ENCODE measurements at regions of chr7 and their contacts with region 1.

Region 1: GRCh38 chr7:150356265-150356897 is 12.2 kb upstream of the REPIN1 start:
- DNase-seq: no peak
- H3K4me3 ChIP-seq: no peak overlapping the region
- H3K27ac ChIP-seq: no peak overlapping the region
- H3K4me1 ChIP-seq: peaks cover 8% of the 10 kb centered on the region; the same call in 1 of the 2 replicates
- H3K27me3 ChIP-seq: no peaks in the 10 kb centered on the region
- CTCF ChIP-seq: peak; percentile 85

Region 2: DNA sequence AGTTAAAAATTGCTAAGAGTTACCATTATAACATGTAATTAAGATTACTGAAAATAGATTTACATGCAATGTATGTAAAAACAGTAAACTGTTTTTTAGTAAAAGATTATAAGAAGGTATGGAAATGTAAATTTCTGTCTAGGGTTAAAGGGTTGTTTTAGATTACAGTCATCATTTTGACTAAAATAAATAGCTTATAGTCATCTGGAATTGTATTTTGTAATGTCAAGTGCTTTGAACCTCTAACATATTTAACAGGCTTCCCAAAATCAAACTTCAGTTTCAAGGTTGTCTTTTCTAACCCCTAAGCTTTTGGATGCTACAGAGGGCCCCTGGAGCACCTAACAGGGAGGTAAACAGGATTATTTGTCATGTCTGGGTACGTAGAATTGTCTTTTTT is 823.7 kb before region 1 on chr7:
- CTCF ChIA-PET with region 1: interaction called, 11 read pairs
- POLR2A ChIA-PET with region 1: no interaction called
- intact Hi-C with region 1: no loop called
- DNase-seq: no peak
- H3K4me3 ChIP-seq: no peak overlapping the region
- H3K27ac ChIP-seq: no peak overlapping the region
- H3K4me1 ChIP-seq: no peaks in the 10 kb centered on the region
- H3K27me3 ChIP-seq: no peaks in the 10 kb centered on the region
- CTCF ChIP-seq: no peak

Region 3: GRCh38 chr7:149690688-149691446 is 665.5 kb before region 1 on chr7:
- CTCF ChIA-PET with region 1: no interaction called
- POLR2A ChIA-PET with region 1: no interaction called
- intact Hi-C with region 1: no loop called
- DNase-seq: peak; percentile 80 to 95
- H3K4me3 ChIP-seq: peak overlapping the region; percentile 59
- H3K27ac ChIP-seq: no peak overlapping the region
- H3K4me1 ChIP-seq: peaks cover 9% of the 10 kb centered on the region
- H3K27me3 ChIP-seq: no peaks in the 10 kb centered on the region
- CTCF ChIP-seq: no peak

Region 4: GRCh38 chr7:150314639-150315239 is 41.6 kb before region 1 on chr7:
- CTCF ChIA-PET with region 1: interaction called, 4 read pairs
- POLR2A ChIA-PET with region 1: interaction called, 19 read pairs
- intact Hi-C with region 1: no loop called
- DNase-seq: peak in 1 of 2 experiments; percentile 29
- H3K4me3 ChIP-seq: no peak overlapping the region
- H3K27ac ChIP-seq: 0 out of 2 replicates have a peak overlapping the region, but pooled peaks have one; percentile 71
- H3K4me1 ChIP-seq: peaks cover 64% of the 10 kb centered on the region
- H3K27me3 ChIP-seq: no peaks in the 10 kb centered on the region
- CTCF ChIP-seq: no peak

Region 5: GRCh38 chr7:150378853-150379440 is 22.6 kb after region 1 on chr7 and contains the start of gene ZNF775:
- CTCF ChIA-PET with region 1: no interaction called
- POLR2A ChIA-PET with region 1: no interaction called
- intact Hi-C with region 1: loop called (anchors 1 kb)
- DNase-seq: peak; percentile 89 to 99
- H3K4me3 ChIP-seq: peak within 1 kb of the TSS; percentile 89
- H3K27ac ChIP-seq: peak within 1 kb of the TSS; percentile 31
- H3K4me1 ChIP-seq: peaks cover 20% of the 10 kb centered on the region
- H3K27me3 ChIP-seq: no peaks in the 10 kb centered on the region
- CTCF ChIP-seq: no peak
- total RNA-seq, gene ZNF775: 3.1 and 3.4 TPM in 2 replicates

Region 6: DNA sequence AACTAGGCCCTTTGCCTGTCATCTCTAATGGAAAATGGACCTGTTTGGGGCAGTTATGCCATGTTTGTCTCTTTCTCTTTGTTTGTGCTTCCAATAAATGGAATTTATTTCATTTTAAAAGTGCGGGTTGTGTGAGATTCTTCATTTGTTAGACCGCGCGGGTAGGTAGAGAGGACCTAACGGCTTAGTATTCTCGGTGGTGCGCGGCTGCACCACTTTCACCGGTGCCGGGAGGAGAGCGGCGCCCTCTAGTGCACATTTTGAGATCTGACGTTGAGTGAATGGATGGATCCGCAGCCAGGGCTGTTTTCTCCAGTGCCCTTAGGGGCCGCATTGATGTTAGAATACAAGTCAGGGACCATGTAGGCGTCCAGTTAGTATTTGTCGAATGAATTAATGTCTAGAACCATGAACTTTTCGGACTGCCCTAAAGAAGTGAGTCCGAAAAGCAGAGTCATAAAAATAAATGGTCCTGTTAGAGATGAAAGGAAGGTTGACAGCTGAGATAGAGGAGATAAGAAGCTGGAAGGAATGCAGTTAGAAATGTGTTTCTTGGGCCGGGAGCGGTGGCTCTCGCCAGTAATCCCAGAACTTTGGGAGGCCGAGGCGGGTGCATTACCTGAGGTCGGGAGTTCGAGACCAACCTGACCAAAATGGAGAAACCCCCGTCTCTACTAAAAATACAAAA is 64.8 kb after region 1 on chr7:
- CTCF ChIA-PET with region 1: interaction called, 10 read pairs
- POLR2A ChIA-PET with region 1: no interaction called
- intact Hi-C with region 1: loop called (anchors 1 kb)
- DNase-seq: peak; percentile 62 to 83
- H3K4me3 ChIP-seq: no peak overlapping the region
- H3K27ac ChIP-seq: no peak overlapping the region
- H3K4me1 ChIP-seq: no peaks in the 10 kb centered on the region; the same call in 1 of the 2 replicates
- H3K27me3 ChIP-seq: peaks cover 15% of the 10 kb centered on the region; the same call in 1 of the 2 replicates
- CTCF ChIP-seq: peak; percentile 96

Region 7: GRCh38 chr7:150514748-150515222 is 158.4 kb after region 1 on chr7 and contains the start of gene GIMAP7:
- CTCF ChIA-PET with region 1: no interaction called
- POLR2A ChIA-PET with region 1: no interaction called
- intact Hi-C with region 1: no loop called
- DNase-seq: no peak
- H3K4me3 ChIP-seq: no peak within 1 kb of the TSS
- H3K27ac ChIP-seq: no peak within 1 kb of the TSS
- H3K4me1 ChIP-seq: no peaks in the 10 kb centered on the region
- H3K27me3 ChIP-seq: peaks cover 89% of the 10 kb centered on the region
- CTCF ChIP-seq: no peak
- total RNA-seq, gene GIMAP7: not detected in 2 replicates

Region 8: DNA sequence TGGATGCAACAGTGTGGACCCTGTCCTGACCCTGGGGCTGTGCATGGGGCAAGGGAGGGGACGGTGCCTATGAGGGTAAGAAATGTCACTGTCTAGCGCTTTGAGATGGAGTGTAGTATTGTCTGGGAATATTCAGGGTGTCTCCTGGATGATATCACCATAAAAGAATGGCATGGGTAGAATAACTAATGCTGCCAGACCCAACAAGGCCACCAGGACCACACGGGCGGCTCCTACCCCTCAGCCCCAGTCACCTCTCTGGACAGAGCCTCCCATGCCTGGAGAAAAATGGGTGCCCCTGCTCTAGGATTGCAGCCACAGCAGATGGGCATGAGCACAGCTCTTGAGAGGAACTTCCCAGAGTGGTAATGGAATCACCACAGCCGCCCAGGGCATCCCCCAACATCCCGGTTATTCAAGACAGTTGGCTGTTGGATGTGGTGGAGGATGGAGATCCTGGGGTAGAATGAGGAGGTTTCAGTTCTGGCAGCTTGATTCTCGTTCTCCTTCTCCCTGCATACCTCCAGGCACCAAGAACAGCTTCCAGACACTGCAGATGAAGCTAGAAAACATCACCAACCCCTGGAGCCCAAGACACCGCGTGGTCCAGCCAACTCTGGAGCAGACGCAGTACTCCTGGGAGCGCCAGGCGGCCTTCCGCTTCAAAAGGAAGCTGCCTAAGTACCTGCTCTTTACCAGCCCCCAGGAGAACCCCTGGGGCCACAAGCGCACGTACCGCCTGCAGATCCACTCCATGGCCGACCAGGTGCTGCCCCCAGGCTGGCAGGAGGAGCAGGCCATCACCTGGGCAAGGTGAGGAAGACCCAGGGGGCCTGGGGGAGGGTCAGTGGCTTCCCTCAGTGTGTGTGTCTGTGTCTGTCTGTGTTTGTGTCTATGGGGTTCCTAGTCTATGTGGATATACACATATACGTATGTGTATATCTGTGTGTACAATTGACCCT is 502.1 kb after region 1 on chr7:
- CTCF ChIA-PET with region 1: interaction called, 14 read pairs
- POLR2A ChIA-PET with region 1: no interaction called
- intact Hi-C with region 1: no loop called
- DNase-seq: no peak
- H3K4me3 ChIP-seq: no peak overlapping the region
- H3K27ac ChIP-seq: no peak overlapping the region
- H3K4me1 ChIP-seq: no peaks in the 10 kb centered on the region
- H3K27me3 ChIP-seq: peaks cover 100% of the 10 kb centered on the region
- CTCF ChIP-seq: no peak

Measured in PC-9 (cell line).